ENCODE measurements at regions of chr1 and their contacts with region 1.

Region 1: GRCh38 chr1:6052543-6053205 is 7.0 kb downstream of the KCNAB2 start:
- DNase-seq: peak; percentile 70 to 83 (median 75)
- ATAC-seq: peak; percentile 86
- H3K4me3 ChIP-seq: no peak overlapping the region
- H3K27ac ChIP-seq: no peak overlapping the region
- H3K4me1 ChIP-seq: peaks cover 0 to under 1% of the 10 kb centered on the region in 2 experiments; a peak in 1 of 5 replicates
- H3K27me3 ChIP-seq: peaks cover 9 to 29% of the 10 kb centered on the region in 2 experiments; a peak in 4 of 5 replicates
- CTCF ChIP-seq: peak; percentile 72 to 84 (median 72)
- EP300 ChIP-seq: no peak
- POLR2A ChIP-seq: no peak
- RAD21 ChIP-seq: peak in 1 of 2 experiments; percentile 85; a peak in 3 of 4 replicates

Region 2: DNA sequence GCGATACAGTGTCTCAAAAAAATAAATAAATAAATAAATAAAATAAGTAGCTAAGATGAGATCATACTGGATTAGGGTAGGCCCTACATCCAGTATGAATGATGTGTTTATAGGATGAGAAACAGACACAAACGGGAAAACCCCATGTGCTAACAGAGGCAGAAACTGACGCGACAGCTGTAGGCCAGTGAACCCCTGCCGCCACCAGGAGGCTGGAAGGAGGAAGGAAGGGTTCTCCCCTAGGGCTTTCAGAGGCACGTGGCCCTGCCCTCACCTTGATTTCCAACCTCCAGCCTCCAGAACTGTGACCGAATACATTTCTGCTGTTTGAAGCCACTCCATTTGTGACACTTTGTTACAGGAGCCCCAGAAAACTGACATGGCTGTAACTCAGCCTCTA is 88.9 kb after region 1 on chr1:
- CTCF ChIA-PET with region 1: no interaction called
- POLR2A ChIA-PET with region 1: no interaction called
- in situ Hi-C with region 1: no loop called
- intact Hi-C with region 1: loop called (anchors 1 kb)
- DNase-seq: peak; percentile 54 to 69 (median 61)
- ATAC-seq: peak; percentile 90
- H3K4me3 ChIP-seq: no peak overlapping the region
- H3K27ac ChIP-seq: no peak overlapping the region
- H3K4me1 ChIP-seq: peaks cover 0 to 16% of the 10 kb centered on the region in 2 experiments; a peak in 1 of 5 replicates
- H3K27me3 ChIP-seq: peaks cover 64 to 89% of the 10 kb centered on the region in 2 experiments
- CTCF ChIP-seq: peak; percentile 51 to 75 (median 61)
- EP300 ChIP-seq: no peak
- POLR2A ChIP-seq: no peak
- RAD21 ChIP-seq: peak in 1 of 2 experiments; percentile 63; a peak in 2 of 4 replicates

Region 3: DNA sequence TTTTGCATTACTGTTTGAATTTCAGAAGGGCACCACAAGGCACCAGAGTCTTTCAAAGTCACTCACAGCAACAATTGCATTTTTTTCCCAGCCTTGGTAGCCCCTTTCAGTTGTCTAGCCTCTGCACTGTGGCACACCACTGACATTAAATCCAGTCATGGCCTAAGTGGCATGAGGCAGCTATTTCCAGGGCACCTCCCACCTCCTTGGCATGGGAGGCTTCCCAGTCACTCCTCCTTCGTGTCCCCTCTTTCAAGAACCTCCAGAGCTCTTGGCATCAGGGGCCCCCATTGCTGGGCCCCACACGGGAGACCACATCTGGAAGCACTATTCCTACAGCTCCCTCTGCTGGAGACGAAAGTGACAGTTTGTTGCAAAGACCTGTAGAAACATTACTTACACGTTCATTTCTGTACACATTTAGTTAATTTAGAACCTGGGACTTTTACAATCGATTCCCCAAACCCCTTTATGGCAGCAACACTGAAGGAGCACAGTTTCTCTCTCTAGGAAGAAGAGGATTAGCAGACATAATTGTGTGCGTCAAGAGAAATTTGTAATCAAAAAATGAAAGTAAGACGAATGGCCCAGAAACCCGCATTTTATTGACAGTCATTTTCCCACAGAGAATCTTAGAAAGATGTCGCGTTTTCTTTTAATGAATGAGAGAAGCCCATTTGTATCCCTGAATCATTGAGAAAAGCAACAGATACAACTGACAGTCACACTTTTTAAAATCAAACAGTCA is 133.1 kb after region 1 on chr1:
- CTCF ChIA-PET with region 1: no interaction called
- POLR2A ChIA-PET with region 1: interaction called, 3 read pairs
- in situ Hi-C with region 1: no loop called
- intact Hi-C with region 1: loop called (anchors 1 kb)
- DNase-seq: peak in 3 of 4 experiments; percentile 66 to 74 (median 67)
- ATAC-seq: peak; percentile 71
- H3K4me3 ChIP-seq: no peak overlapping the region
- H3K27ac ChIP-seq: no peak overlapping the region
- H3K4me1 ChIP-seq: peaks cover 3 to 5% of the 10 kb centered on the region in 2 experiments; a peak in 3 of 5 replicates
- H3K27me3 ChIP-seq: no peaks in the 10 kb centered on the region
- CTCF ChIP-seq: peak; percentile 67 to 81 (median 77)
- EP300 ChIP-seq: no peak
- POLR2A ChIP-seq: peak; percentile 76
- RAD21 ChIP-seq: peak in 1 of 2 experiments; percentile 60; a peak in 3 of 4 replicates

Measured in K562 (cell line).